AG04450 (cell line): ENCODE measurements at regions of chr7 and their contacts with region 1.

Region 1: DNA sequence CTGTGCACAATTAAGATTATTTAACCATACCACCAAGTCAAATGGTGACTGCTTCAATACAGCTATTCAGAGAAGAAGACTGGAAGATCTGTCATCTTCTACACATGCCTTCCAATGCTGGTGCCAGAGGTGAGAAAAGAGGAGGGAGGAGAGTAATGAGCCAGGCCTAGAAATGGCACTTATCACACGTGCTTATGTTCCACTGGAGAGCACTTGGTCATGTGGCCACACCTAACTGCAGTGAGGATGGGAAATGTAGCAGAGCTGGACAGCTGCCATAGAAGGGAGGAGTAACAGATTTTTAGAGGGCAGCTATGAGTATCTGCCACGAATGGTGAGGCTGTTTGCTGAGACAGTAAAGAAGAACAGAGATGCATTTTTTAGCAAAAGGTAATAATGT is 77.1 kb downstream of the MPLKIP start:
- DNase-seq: no peak
- H3K4me3 ChIP-seq: no peak overlapping the region
- H3K27ac ChIP-seq: no peak overlapping the region
- H3K27me3 ChIP-seq: no peaks in the 10 kb centered on the region
- CTCF ChIP-seq: no peak

Region 2: GRCh38 chr7:39894904-39895303 is 162.4 kb before region 1 on chr7:
- CTCF ChIA-PET with region 1: interaction called, 251 read pairs
- POLR2A ChIA-PET with region 1: no interaction called
- DNase-seq: no peak
- H3K4me3 ChIP-seq: no peak overlapping the region
- H3K27ac ChIP-seq: no peak overlapping the region
- H3K27me3 ChIP-seq: peaks cover 54% of the 10 kb centered on the region
- CTCF ChIP-seq: no peak

Region 3: GRCh38 chr7:39948956-39949928 is 108.0 kb before region 1 on chr7:
- CTCF ChIA-PET with region 1: interaction called, 43 read pairs
- POLR2A ChIA-PET with region 1: interaction called, 3 read pairs
- DNase-seq: peak; percentile 99
- H3K4me3 ChIP-seq: peak overlapping the region; percentile 94
- H3K27ac ChIP-seq: peak overlapping the region; percentile 97
- H3K27me3 ChIP-seq: no peaks in the 10 kb centered on the region
- CTCF ChIP-seq: no peak

Region 4: DNA sequence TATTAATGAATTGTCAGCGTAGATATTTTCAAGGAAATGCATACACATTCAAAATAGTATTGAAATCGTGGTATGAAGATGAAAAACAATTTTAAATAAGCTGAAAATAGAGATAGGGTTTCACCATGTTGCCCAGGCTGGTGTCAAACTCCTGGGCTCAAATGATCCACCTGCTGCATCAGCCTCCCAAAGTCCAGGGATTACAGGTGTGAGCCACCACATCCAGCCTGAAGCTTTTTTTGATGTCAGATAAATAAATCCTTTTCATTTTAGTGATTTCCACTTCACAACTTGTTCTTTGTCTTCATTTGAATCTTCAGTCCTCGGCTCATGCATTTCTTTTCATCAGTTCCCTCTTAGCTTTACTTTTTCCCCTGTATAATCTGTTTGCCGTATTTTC is 102.6 kb before region 1 on chr7:
- CTCF ChIA-PET with region 1: interaction called, 43 read pairs
- POLR2A ChIA-PET with region 1: interaction called, 3 read pairs
- DNase-seq: no peak
- H3K4me3 ChIP-seq: no peak overlapping the region
- H3K27ac ChIP-seq: no peak overlapping the region
- H3K27me3 ChIP-seq: no peaks in the 10 kb centered on the region
- CTCF ChIP-seq: no peak

Region 5: DNA sequence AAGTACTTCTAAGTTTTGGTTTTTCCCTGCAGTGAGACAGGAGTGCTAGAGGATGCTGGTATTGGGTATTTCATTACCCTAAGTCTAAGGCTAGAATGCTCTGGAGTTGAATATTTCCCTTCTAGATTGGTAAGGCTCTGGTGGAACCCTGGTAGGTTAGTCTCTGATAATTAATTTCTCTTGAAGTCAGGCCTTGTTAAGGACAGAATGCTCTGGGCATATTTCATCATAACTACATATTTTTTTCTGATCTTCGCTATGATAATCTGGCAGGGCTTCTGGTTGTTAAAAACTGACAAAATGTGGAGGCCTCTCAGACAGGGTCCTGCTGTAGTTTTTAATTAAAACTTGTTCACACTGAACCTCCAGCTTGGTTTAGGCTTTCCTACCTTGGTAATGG is 23.5 kb before region 1 on chr7:
- CTCF ChIA-PET with region 1: interaction called, 16 read pairs
- POLR2A ChIA-PET with region 1: no interaction called
- DNase-seq: no peak
- H3K4me3 ChIP-seq: no peak overlapping the region
- H3K27ac ChIP-seq: no peak overlapping the region
- H3K27me3 ChIP-seq: no peaks in the 10 kb centered on the region
- CTCF ChIP-seq: no peak

Region 6: GRCh38 chr7:40041456-40041855 is 15.8 kb before region 1 on chr7:
- CTCF ChIA-PET with region 1: interaction called, 25 read pairs
- POLR2A ChIA-PET with region 1: no interaction called
- DNase-seq: no peak
- H3K4me3 ChIP-seq: no peak overlapping the region
- H3K27ac ChIP-seq: no peak overlapping the region
- H3K27me3 ChIP-seq: no peaks in the 10 kb centered on the region
- CTCF ChIP-seq: no peak

Region 7: DNA sequence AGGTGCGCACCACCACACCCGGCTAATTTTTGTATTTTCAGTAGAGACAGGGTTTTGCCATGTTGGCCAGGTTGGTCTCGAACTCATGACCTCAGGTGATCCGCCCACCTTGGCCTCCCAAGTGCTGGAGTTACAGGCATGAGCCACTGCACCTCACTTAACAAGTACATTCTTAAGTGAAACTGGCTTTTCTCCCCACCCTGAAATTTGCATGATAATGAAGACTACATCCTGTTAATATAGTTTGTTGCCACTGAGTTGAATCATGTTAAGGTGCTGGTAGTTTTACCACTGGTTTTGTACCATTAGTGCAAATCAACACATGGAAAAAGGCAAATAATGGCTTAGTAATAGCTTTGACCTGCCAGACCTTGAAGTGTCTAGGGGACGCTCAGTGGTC is 15.0 kb after region 1 on chr7:
- CTCF ChIA-PET with region 1: interaction called, 15 read pairs
- POLR2A ChIA-PET with region 1: no interaction called
- DNase-seq: no peak
- H3K4me3 ChIP-seq: no peak overlapping the region
- H3K27ac ChIP-seq: no peak overlapping the region
- H3K27me3 ChIP-seq: no peaks in the 10 kb centered on the region
- CTCF ChIP-seq: no peak

Region 8: DNA sequence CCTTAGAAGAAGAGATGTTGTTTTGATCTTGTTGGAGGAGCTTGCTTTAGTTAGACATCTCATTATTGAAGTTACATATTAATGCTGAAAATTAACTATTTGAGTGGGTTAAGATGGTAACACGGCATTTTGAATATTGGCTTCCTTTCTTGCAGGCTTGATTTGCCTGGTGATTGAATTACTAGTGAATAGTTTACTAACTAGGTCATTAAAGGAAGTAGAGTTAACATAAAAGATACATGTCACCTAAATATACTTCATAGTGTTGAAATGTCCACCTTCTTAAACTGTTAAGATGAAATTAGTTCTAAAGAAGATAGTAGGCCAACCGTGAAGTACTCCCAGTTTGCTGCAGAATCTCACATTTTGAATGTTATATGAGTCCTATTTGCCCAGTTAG is 58.6 kb after region 1 on chr7:
- CTCF ChIA-PET with region 1: no interaction called
- POLR2A ChIA-PET with region 1: no interaction called
- DNase-seq: no peak
- H3K4me3 ChIP-seq: no peak overlapping the region
- H3K27ac ChIP-seq: no peak overlapping the region
- H3K27me3 ChIP-seq: no peaks in the 10 kb centered on the region
- CTCF ChIP-seq: no peak

Region 9: GRCh38 chr7:40566879-40567278 is 509.6 kb after region 1 on chr7:
- CTCF ChIA-PET with region 1: no interaction called
- POLR2A ChIA-PET with region 1: no interaction called
- DNase-seq: no peak
- H3K4me3 ChIP-seq: no peak overlapping the region
- H3K27ac ChIP-seq: no peak overlapping the region
- H3K27me3 ChIP-seq: no peaks in the 10 kb centered on the region
- CTCF ChIP-seq: no peak